Vagina (tissue), 2 donors: ENCODE measurements at regions of chr1 and their contacts with region 1.

Region 1: GRCh38 chr1:1399187-1399871 is at the start of gene CCNL2:
- DNase-seq: peak in 1 of 2 donors; percentile 97
- H3K4me3 ChIP-seq: peak within 1 kb of the TSS; percentile 73 to 77
- H3K27ac ChIP-seq: peak within 1 kb of the TSS; percentile 66
- H3K4me1 ChIP-seq: peaks cover 38% of the 10 kb centered on the region
- H3K27me3 ChIP-seq: no peaks in the 10 kb centered on the region
- CTCF ChIP-seq: peak in 2 of 3 experiments; percentile 52 to 76
- POLR2A ChIP-seq: peak in 1 of 2 donors; percentile 32
- total RNA-seq, gene CCNL2: 319 TPM

Region 2: DNA sequence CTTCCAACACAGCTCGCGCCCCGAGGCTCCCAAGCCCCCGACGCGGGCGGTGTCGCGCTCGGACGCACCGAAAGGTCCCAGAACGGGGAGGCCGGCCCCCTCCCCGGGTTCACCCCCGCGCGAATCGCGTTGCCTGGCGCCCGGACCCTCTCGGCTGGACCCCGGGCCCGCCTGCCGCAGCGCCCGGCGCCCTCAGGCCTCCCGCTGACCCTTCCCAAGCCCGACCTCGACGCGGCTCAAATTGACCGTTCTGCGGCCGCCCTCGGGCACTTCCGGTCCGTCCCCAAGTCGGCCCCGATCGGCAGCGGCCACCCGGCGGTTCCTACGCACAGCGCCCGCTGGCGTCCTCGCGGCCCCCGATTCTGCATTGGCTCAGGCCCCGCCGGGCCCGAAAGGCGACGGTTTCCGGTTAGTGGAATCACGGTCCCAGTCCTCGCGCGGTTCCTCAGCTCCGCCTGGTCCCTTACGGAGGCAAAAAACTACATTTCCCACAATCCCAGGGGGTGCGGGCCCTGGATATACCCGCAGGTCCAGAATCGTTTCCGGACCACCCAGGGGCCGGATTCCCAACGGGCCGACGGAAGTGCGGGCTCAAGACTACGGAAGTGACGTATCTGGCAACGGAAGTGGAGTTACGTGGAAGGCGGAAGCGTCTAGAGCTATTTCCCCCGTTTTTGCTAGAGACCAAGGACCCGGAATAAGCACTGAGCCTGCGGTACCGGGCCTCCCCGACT is 24.2 kb before region 1 on chr1 and contains the start of gene AURKAIP1:
- intact Hi-C with region 1: loop called (anchors 2 kb)
- DNase-seq: peak; percentile 99
- H3K4me3 ChIP-seq: peak within 1 kb of the TSS; percentile 93 to 99
- H3K27ac ChIP-seq: peak within 1 kb of the TSS; percentile 93
- H3K4me1 ChIP-seq: peaks cover 40% of the 10 kb centered on the region
- H3K27me3 ChIP-seq: no peaks in the 10 kb centered on the region
- CTCF ChIP-seq: peak in 2 of 3 experiments; percentile 7 to 29
- POLR2A ChIP-seq: no peak
- total RNA-seq, gene AURKAIP1: 94.5 TPM

Region 3: DNA sequence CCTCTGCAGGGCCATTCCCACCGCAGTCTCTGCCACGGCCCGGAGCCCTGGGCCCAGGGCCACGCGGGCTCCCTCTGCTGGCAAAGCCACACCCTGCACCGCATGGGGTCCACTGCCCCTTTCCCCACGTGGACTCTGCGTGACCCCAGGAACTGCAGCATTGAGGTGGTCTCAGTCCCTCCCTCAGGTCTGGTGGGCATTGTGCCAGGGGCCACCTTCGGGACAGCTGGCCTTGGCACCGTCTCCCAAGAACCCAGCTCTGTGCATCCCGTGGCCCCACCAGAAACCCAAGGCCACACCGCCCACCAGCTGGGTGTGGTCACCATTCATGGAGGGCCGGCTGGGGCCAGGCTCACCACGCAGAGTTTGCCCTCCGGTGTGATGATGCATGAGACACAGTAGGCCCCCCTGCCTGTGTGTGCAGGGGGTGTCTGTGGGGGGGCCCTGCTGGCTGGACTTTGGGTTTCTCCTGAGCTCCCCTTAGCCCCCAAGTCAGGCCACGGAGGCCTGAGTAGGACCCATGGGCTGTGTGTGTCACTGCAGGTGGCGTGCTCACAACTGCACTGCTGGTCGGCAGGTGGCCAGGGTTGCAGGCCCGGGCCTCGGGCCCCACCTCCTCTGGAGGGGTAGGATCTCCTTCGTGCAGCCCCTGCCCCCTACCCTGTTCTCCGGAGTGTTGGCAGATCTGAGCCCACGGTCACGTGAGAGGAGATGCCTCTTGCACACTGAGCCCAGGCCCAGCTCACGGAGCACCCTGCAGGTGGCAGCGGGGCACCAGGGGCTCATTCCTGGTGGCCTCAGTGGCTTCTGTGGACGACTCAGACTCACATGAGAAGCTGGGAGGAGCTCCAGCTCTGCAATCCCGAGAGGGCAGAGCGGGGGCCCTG is 41.9 kb after region 1 on chr1:
- intact Hi-C with region 1: no loop called
- DNase-seq: no peak
- H3K4me3 ChIP-seq: no peak overlapping the region
- H3K27ac ChIP-seq: no peak overlapping the region
- H3K4me1 ChIP-seq: peaks cover 32% of the 10 kb centered on the region
- H3K27me3 ChIP-seq: no peaks in the 10 kb centered on the region
- CTCF ChIP-seq: peak; percentile 74 to 80 (median 80)
- POLR2A ChIP-seq: no peak